Prostate gland (tissue), 2 donors: ENCODE measurements at regions of chr5 and their contacts with region 1.

Region 1: DNA sequence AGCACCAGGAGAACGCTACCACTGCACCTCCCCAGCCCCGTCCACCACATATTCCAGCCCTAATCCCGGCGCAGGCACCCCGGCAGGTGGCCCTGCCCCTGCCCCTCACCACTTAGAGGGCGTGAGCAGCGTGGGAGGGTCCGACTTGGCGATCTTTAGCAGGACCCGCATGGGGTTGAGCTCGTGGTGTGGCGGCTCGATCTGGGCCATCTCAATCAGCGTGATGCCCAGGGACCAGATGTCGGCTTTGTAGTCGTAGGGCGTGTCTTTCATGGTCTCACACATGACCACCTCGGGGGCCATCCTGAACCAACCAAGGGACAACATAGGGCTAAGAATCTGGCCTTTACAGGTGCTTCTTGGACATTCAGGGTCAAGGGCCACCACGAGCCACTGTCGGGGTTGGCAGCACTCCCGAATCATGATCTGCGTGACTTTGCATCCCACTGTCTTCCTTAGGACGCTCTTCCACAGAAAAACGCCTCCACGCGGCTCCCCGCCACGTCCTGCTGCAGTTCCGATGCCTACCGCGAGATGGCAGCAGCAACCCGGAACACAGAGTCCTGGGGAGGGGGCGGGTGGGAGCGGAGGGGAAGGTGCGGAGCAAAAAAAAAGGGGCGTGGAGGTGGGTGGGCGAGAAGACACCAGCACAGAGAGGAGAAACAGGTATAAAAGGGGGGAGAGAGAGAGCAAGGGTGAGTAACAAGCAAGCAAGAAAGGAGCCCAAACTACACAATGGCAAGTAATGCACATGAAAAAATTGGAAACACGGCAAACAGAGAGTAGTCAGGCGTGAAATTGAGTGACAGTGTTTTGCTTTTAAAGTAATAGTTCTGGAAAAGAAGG is 81.3 kb downstream of the STK10 start:
- DNase-seq: peak; percentile 39
- H3K4me3 ChIP-seq: peak overlapping the region; percentile 8 to 19
- H3K27ac ChIP-seq: no peak overlapping the region
- H3K4me1 ChIP-seq: peaks cover 7% of the 10 kb centered on the region
- H3K27me3 ChIP-seq: no peaks in the 10 kb centered on the region
- CTCF ChIP-seq: peak; percentile 76 to 98 (median 89)
- POLR2A ChIP-seq: no peak

Region 2: DNA sequence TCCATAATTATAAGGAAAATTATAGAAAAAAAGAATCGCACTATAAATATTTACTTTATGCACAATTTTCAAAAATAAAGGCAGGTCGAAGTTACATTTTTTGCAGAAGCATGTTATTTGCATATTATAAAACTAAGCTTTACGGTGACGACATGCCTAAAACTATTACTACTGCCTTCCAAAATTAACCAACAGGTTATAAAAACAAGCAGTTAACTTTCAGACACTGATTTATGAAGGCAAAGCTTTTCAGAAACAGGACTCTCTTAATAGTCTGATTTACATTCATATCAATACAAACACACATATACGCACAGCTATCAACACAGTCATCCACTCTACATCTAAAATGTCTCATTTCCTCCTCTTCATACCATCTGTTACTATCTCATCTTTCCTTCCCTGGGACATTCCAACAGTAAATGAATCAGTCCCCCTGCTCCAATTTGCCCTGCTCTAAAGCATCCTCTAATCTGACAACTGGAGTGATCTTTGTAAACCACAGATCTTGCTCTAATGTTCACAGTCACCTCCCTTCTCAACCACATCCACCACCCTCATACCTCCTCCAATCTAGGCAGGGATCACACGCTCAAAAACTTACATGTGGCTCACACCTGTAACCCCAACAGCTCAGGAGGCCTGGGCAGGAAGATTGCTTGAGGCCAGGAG is 121.8 kb before region 1 on chr5:
- intact Hi-C with region 1: no loop called
- DNase-seq: no peak
- H3K4me3 ChIP-seq: no peak overlapping the region
- H3K27ac ChIP-seq: no peak overlapping the region
- H3K4me1 ChIP-seq: no peaks in the 10 kb centered on the region
- H3K27me3 ChIP-seq: no peaks in the 10 kb centered on the region
- CTCF ChIP-seq: no peak
- POLR2A ChIP-seq: no peak

Region 3: GRCh38 chr5:172293054-172293744 is 186.5 kb after region 1 on chr5:
- intact Hi-C with region 1: loop called (anchors 5 kb)
- DNase-seq: peak; percentile 51
- H3K4me3 ChIP-seq: no peak overlapping the region
- H3K27ac ChIP-seq: no peak overlapping the region
- H3K4me1 ChIP-seq: no peaks in the 10 kb centered on the region
- H3K27me3 ChIP-seq: no peaks in the 10 kb centered on the region
- CTCF ChIP-seq: peak; percentile 43 to 79 (median 72)
- POLR2A ChIP-seq: no peak